MCF 10A (cell line): ENCODE measurements at regions of chr4 and their contacts with region 1.

Region 1: DNA sequence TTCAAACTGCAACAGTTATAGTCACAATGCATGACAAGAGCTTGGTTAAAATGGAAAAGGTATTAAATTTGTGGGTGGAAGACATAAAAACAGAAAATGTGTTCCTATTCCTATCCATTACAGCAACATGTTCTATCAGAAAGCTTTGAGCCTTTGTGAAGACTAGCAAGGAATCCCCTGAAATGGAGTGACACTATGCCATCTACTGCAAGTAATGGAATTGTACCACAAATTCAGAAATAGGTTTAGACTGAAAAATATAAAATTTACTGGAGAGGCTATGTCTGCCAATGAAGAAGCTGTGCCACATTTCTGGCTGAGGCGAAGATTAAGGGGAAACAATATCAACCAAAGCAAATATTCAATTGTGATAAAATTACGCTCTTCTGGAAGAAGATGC is 247.9 kb downstream of the ADAM29 start:
- DNase-seq: peak; percentile 17
- H3K4me3 Mint-ChIP-seq: no peak overlapping the region
- H3K27ac Mint-ChIP-seq: no peak overlapping the region
- H3K4me1 Mint-ChIP-seq: no peaks in the 10 kb centered on the region
- H3K27me3 Mint-ChIP-seq: no peaks in the 10 kb centered on the region
- CTCF ChIP-seq: no peak

Region 2: GRCh38 chr4:174873931-174874330 is 292.1 kb before region 1 on chr4:
- CTCF ChIA-PET with region 1: no interaction called
- POLR2A ChIA-PET with region 1: no interaction called
- intact Hi-C with region 1: loop called (anchors 10 kb)
- DNase-seq: peak; percentile 63
- H3K4me3 Mint-ChIP-seq: no peak overlapping the region
- H3K27ac Mint-ChIP-seq: no peak overlapping the region
- H3K4me1 Mint-ChIP-seq: no peaks in the 10 kb centered on the region
- H3K27me3 Mint-ChIP-seq: no peaks in the 10 kb centered on the region
- CTCF ChIP-seq: peak; percentile 37

Region 3: GRCh38 chr4:175238827-175239521 is 73.0 kb after region 1 on chr4:
- CTCF ChIA-PET with region 1: no interaction called
- POLR2A ChIA-PET with region 1: no interaction called
- intact Hi-C with region 1: no loop called
- DNase-seq: peak; percentile 44
- H3K4me3 Mint-ChIP-seq: no peak overlapping the region
- H3K27ac Mint-ChIP-seq: no peak overlapping the region
- H3K4me1 Mint-ChIP-seq: no peaks in the 10 kb centered on the region
- H3K27me3 Mint-ChIP-seq: no peaks in the 10 kb centered on the region
- CTCF ChIP-seq: no peak

Region 4: DNA sequence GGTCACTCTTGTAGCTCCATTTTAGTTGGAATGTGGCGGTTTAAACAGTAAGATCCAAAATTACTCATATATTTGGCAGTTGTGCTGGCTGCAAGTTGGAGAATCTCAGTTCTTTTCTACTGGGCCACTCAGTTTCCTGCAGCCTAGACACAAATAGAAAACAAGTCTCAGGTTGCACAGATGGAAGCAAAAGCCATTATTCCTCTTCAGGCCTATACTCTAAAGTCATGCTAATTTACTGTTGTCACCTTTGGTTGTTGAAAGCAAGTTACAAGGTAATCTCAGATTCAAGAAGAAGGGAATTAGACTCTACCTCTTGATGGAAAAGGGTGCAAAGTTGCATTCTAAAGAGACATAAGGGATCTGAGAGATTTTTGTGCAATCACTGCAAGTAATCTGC is 97.5 kb after region 1 on chr4:
- CTCF ChIA-PET with region 1: no interaction called
- POLR2A ChIA-PET with region 1: no interaction called
- intact Hi-C with region 1: no loop called
- DNase-seq: no peak
- H3K4me3 Mint-ChIP-seq: no peak overlapping the region
- H3K27ac Mint-ChIP-seq: no peak overlapping the region
- H3K4me1 Mint-ChIP-seq: no peaks in the 10 kb centered on the region
- H3K27me3 Mint-ChIP-seq: no peaks in the 10 kb centered on the region
- CTCF ChIP-seq: no peak

Region 5: GRCh38 chr4:175435381-175435783 is 269.4 kb after region 1 on chr4:
- CTCF ChIA-PET with region 1: no interaction called
- POLR2A ChIA-PET with region 1: no interaction called
- intact Hi-C with region 1: no loop called
- DNase-seq: no peak
- H3K4me3 Mint-ChIP-seq: no peak overlapping the region
- H3K27ac Mint-ChIP-seq: no peak overlapping the region
- H3K4me1 Mint-ChIP-seq: no peaks in the 10 kb centered on the region
- H3K27me3 Mint-ChIP-seq: no peaks in the 10 kb centered on the region
- CTCF ChIP-seq: no peak

Region 6: GRCh38 chr4:176949029-176949428 is 1783.0 kb after region 1 on chr4:
- CTCF ChIA-PET with region 1: no interaction called
- POLR2A ChIA-PET with region 1: no interaction called
- intact Hi-C with region 1: no loop called
- DNase-seq: no peak
- H3K4me3 Mint-ChIP-seq: no peak overlapping the region
- H3K27ac Mint-ChIP-seq: no peak overlapping the region
- H3K4me1 Mint-ChIP-seq: no peaks in the 10 kb centered on the region
- H3K27me3 Mint-ChIP-seq: no peaks in the 10 kb centered on the region
- CTCF ChIP-seq: no peak